ENCODE measurements at regions of chr2 and their contacts with region 1.

Region 1: DNA sequence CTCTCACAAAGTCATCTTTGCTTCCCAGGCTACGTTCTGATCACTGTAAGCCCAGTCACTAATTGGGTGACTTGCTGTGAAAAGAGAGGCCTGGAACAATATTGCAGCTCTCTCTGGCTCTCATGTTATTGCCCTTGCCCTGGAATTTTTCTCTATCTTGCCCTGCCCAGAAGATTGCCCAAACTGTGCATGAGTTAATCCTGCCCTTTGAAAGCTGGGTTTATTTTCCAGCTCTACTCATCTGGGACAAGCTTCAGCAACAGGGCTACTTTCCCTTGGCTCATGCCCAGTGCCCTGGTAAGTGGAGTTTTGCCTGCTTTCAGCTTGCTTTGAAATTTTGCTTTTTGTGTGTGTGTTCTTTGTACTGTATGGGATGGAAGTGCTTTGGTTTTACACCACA is 6.9 kb upstream of the EHBP1 start:
- DNase-seq: no peak
- H3K4me3 ChIP-seq: no peak overlapping the region
- H3K27ac ChIP-seq: no peak overlapping the region
- H3K27me3 ChIP-seq: peaks cover 0 to 2% (median 0%) of the 10 kb centered on the region in 45 donors
- CTCF ChIP-seq: no peak

Region 2: DNA sequence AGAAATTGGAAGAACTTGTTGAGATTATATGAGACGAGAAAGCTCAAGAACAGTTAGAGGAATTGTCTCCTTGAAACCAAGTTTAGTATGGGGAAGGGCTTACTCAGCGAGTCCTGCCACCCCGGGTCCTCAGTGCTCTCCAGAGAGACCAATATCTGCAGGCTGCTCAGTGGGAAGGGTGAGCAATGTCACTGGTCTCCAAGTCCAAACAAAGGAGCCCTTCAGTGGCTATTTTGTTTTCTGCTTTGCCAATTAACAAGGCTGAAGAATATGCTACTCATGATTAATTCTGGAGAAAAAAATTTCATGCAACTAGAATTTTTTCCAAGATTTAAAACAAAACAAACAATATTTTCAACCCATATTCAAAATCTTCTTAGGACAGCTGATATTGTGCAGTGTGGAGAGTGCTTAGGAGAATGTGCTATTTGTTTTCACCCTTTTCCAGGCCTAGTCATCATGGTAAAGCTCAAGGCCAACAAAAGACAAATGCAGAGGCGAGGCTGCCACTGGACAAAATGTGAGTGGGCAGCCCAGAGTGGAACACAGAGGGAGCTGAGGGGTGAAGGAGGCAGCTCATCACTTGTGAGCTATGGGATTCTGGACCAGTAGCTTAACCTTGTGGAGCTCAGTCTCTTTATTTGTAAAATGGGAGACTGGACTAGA is 108.8 kb before region 1 on chr2:
- intact Hi-C with region 1: loop called in 1 of 2 experiments (anchors 5 kb)
- DNase-seq: peak in 4 of 10 donors; percentile 14 to 52 (median 36)
- H3K4me3 ChIP-seq: peak overlapping the region in 2 of 59 donors; percentile 0 to 4
- H3K27ac ChIP-seq: peak overlapping the region in 46 of 59 donors; percentile 1 to 77 (median 45)
- H3K27me3 ChIP-seq: no peaks in the 10 kb centered on the region
- CTCF ChIP-seq: peak in 1 of 56 donors; percentile 12